MCF 10A (cell line): ENCODE measurements at regions of chr9 and their contacts with region 1.

Region 1: DNA sequence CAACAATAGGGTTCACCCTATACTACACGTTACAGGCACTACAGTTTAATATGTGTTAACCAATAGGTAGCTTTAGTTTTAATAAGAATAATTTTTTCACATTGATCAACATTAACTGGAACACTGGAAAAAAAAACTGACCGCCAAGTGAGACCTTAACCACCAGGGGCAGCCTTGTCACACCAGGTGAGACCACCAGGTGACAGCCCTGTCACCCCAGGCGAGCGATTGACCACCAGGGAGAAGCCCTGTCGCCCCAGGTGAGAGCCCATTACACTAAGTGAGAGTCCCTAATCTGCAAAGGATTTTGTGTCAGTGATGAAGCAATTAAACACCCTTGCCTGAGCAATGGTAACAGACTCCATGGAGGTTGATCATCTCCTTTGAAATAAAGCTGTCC is 75.4 kb upstream of the SYK start:
- DNase-seq: no peak
- H3K4me3 Mint-ChIP-seq: no peak overlapping the region
- H3K27ac Mint-ChIP-seq: no peak overlapping the region
- H3K4me1 Mint-ChIP-seq: no peaks in the 10 kb centered on the region
- H3K27me3 Mint-ChIP-seq: peaks cover 70% of the 10 kb centered on the region
- CTCF ChIP-seq: no peak

Region 2: DNA sequence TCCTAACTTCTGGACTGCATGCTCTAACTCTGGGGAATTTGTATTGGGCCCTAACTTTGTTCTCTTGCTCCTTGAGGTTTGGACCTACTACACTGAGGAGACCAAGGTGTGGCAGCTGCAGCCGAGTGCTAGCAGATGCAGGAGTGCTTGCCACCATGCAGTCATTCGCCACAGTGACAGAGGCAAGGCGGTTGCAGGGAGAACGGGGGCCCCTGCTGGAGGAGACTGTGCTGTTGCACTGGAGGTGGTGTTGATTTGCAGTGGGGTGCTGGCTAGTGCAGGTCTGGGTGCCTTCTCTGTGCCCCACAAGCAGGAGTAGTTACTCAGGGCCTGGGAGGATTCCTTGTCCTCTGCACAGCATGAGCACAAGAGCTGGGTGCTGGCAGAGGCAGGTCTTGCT is 61.1 kb before region 1 on chr9:
- CTCF ChIA-PET with region 1: no interaction called
- POLR2A ChIA-PET with region 1: no interaction called
- intact Hi-C with region 1: loop called (anchors 10 kb)
- DNase-seq: no peak
- H3K4me3 Mint-ChIP-seq: no peak overlapping the region
- H3K27ac Mint-ChIP-seq: no peak overlapping the region
- H3K4me1 Mint-ChIP-seq: peaks cover 5% of the 10 kb centered on the region
- H3K27me3 Mint-ChIP-seq: peaks cover 91% of the 10 kb centered on the region
- CTCF ChIP-seq: no peak